HepG2 (cell line): ENCODE measurements at regions of chr16 and their contacts with region 1.

Region 1: GRCh38 chr16:67246934-67247697 is at the start of gene FHOD1:
- DNase-seq: peak; percentile 83
- ATAC-seq: peak; percentile 68
- H3K4me3 ChIP-seq: peak within 1 kb of the TSS; percentile 63 to 85 (median 82)
- H3K27ac ChIP-seq: peak within 1 kb of the TSS; percentile 73
- H3K4me1 ChIP-seq: peaks cover 57% of the 10 kb centered on the region
- H3K27me3 ChIP-seq: peaks cover 0 to 22% of the 10 kb centered on the region in 2 experiments; a peak in 3 of 5 replicates
- CTCF ChIP-seq: no peak
- EP300 ChIP-seq: no peak
- POLR2A ChIP-seq: peak; percentile 14 to 72; a peak in 2 of 4 replicates
- RAD21 ChIP-seq: 0 out of 2 replicates have a peak, but pooled peaks have one; percentile 37
- total RNA-seq, gene FHOD1: 10.9 and 20.8 TPM in 2 replicates

Region 2: DNA sequence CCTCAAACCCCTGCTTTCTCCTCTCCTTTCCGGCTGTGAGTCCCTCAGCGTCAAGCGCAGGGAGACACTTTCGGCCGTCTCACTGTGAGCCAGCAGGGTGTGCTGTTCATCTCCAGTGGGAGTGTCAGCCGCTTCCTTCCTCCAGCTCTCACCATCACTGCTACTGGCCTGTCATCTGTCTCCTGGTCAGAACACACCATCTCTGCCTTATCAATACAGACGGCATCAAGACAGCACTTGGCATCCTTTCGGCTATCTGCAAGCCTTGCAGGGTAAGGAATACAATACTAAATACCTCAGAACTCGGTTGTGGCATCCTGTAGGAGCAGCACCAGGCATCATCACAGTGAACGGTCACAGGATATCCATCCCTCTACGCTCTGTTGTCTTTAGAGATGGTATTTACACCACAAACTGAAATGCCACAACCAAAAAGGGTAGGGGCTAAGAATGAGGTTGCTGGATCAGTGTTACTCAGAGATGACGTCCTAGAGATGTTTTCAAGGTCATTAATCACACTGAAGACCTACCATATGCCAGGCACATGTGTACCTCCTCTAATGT is 529.9 kb before region 1 on chr16:
- CTCF ChIA-PET with region 1: no interaction called
- POLR2A ChIA-PET with region 1: no interaction called
- in situ Hi-C with region 1: no loop called
- intact Hi-C with region 1: no loop called
- DNase-seq: peak; percentile 64
- ATAC-seq: peak; percentile 90
- H3K4me3 ChIP-seq: no peak overlapping the region
- H3K27ac ChIP-seq: no peak overlapping the region
- H3K4me1 ChIP-seq: peaks cover 16% of the 10 kb centered on the region
- H3K27me3 ChIP-seq: no peaks in the 10 kb centered on the region; a peak in 2 of 5 replicates
- CTCF ChIP-seq: peak; percentile 86
- EP300 ChIP-seq: no peak
- POLR2A ChIP-seq: no peak
- RAD21 ChIP-seq: peak; percentile 47

Region 3: DNA sequence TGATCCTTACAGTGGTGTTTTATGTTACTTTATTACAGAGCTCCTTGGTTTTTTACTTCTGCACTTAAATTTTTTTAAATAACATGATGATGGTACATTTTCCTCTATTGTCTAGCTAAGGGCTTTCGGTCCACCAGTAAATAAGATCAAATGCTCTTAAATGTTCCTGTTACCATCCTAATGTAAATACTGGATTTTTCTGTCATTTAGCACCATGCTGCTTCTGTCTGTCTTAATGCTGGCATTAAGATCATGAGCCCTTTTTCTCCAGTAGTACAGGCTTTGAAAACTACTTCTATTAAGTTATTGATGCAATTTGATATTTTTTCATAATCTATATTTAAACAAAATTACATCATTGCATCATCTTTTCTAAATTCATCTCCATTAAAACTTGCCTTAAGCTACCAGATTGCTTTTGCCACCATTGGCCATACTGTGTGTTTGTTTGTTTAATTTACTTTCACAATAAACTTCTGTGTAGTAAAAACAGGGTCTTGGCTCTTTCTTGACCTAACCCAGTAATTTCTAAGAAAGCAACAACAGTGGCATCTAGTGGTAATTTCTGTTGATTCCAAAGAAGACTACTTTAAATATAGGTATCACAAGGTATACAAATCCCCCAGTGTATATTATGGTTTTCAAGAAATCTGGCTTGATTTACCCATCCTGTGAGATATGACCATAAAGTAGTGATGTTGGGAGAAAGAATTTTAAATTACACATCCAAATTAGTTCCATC is 146.4 kb before region 1 on chr16:
- CTCF ChIA-PET with region 1: no interaction called
- POLR2A ChIA-PET with region 1: no interaction called
- in situ Hi-C with region 1: no loop called
- intact Hi-C with region 1: no loop called
- DNase-seq: no peak
- ATAC-seq: no peak
- H3K4me3 ChIP-seq: no peak overlapping the region
- H3K27ac ChIP-seq: no peak overlapping the region
- H3K4me1 ChIP-seq: peaks cover 4% of the 10 kb centered on the region; the same call in 1 of the 2 replicates
- H3K27me3 ChIP-seq: no peaks in the 10 kb centered on the region
- CTCF ChIP-seq: peak; percentile 33
- EP300 ChIP-seq: no peak
- POLR2A ChIP-seq: no peak
- RAD21 ChIP-seq: no peak

Region 4: GRCh38 chr16:67191995-67192681 is 55.0 kb before region 1 on chr16 and contains the start of gene E2F4:
- CTCF ChIA-PET with region 1: no interaction called
- POLR2A ChIA-PET with region 1: interaction called, 3 read pairs
- in situ Hi-C with region 1: no loop called
- intact Hi-C with region 1: loop called (anchors 2 kb)
- DNase-seq: peak; percentile 88
- ATAC-seq: peak; percentile 95
- H3K4me3 ChIP-seq: peak within 1 kb of the TSS; percentile 84 to 99 (median 97)
- H3K27ac ChIP-seq: peak within 1 kb of the TSS; percentile 59
- H3K4me1 ChIP-seq: peaks cover 38% of the 10 kb centered on the region
- H3K27me3 ChIP-seq: peaks cover 7 to 16% of the 10 kb centered on the region in 2 experiments; a peak in 2 of 5 replicates
- CTCF ChIP-seq: peak; percentile 41
- EP300 ChIP-seq: no peak
- POLR2A ChIP-seq: peak in 1 of 2 experiments; percentile 64; a peak in 1 of 4 replicates
- RAD21 ChIP-seq: peak; percentile 57
- total RNA-seq, gene E2F4: 73.7 and 84.8 TPM in 2 replicates

Region 5: DNA sequence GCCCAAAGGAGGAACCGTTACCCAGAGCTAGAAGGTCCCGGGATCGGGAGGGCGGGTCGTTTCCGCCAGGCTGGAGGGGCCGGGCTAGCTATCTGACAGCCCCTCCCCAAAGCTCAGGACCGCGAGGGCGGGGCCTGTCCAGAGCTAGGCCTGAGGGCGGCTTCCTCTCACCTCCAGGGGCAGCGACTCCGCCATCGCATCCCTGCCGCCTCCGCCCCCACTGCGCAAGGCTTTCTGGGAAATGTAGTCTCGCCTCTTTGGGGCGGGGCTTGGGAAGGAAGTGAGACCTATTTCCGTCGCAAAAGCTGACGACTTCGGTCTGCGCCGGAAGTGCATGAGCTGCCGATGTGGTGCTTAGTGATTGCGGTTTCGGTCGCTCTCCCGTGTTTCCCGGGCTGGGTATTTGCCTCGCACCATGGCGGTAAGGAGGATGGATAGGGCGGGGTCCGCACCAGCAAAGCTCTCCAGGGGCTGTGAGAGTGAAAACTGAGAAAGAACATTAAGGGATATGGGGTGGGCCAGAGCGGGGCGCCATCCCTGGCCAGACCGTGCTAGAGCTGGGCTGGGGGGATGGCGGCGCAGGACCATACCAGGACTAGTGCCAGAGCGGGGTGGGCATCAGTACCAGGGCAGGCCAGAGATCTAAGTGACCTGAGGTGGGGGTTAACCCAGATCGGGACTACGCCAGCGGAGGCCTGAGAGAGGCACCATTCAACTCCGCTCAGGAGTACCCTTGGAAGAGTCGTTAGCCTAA is 20.1 kb before region 1 on chr16 and contains the start of gene TMEM208:
- CTCF ChIA-PET with region 1: no interaction called
- POLR2A ChIA-PET with region 1: interaction called, 71 read pairs
- in situ Hi-C with region 1: no loop called
- intact Hi-C with region 1: loop called (anchors 1 kb)
- DNase-seq: peak; percentile 99
- ATAC-seq: peak; percentile 96
- H3K4me3 ChIP-seq: peak within 1 kb of the TSS; percentile 97 to 100 (median 98)
- H3K27ac ChIP-seq: peak within 1 kb of the TSS; percentile 55
- H3K4me1 ChIP-seq: peaks cover 34% of the 10 kb centered on the region
- H3K27me3 ChIP-seq: peaks cover 0 to 4% of the 10 kb centered on the region in 2 experiments; a peak in 1 of 5 replicates
- CTCF ChIP-seq: peak; percentile 61
- EP300 ChIP-seq: peak; percentile 30 to 45; a peak in 2 of 4 replicates
- POLR2A ChIP-seq: peak; percentile 90 to 95
- RAD21 ChIP-seq: peak; percentile 45
- total RNA-seq, gene TMEM208: 50.6 and 72.9 TPM in 2 replicates

Region 6: GRCh38 chr16:67269766-67270165 is 22.6 kb after region 1 on chr16:
- CTCF ChIA-PET with region 1: no interaction called
- POLR2A ChIA-PET with region 1: interaction called, 13 read pairs
- in situ Hi-C with region 1: no loop called
- intact Hi-C with region 1: no loop called
- DNase-seq: no peak
- ATAC-seq: peak; percentile 12; the same call in 2 of the 3 replicates
- H3K4me3 ChIP-seq: no peak overlapping the region
- H3K27ac ChIP-seq: no peak overlapping the region
- H3K4me1 ChIP-seq: no peaks in the 10 kb centered on the region
- H3K27me3 ChIP-seq: peaks cover 7 to 17% of the 10 kb centered on the region in 2 experiments; a peak in 4 of 5 replicates
- CTCF ChIP-seq: no peak
- EP300 ChIP-seq: no peak
- POLR2A ChIP-seq: no peak
- RAD21 ChIP-seq: no peak

Region 7: DNA sequence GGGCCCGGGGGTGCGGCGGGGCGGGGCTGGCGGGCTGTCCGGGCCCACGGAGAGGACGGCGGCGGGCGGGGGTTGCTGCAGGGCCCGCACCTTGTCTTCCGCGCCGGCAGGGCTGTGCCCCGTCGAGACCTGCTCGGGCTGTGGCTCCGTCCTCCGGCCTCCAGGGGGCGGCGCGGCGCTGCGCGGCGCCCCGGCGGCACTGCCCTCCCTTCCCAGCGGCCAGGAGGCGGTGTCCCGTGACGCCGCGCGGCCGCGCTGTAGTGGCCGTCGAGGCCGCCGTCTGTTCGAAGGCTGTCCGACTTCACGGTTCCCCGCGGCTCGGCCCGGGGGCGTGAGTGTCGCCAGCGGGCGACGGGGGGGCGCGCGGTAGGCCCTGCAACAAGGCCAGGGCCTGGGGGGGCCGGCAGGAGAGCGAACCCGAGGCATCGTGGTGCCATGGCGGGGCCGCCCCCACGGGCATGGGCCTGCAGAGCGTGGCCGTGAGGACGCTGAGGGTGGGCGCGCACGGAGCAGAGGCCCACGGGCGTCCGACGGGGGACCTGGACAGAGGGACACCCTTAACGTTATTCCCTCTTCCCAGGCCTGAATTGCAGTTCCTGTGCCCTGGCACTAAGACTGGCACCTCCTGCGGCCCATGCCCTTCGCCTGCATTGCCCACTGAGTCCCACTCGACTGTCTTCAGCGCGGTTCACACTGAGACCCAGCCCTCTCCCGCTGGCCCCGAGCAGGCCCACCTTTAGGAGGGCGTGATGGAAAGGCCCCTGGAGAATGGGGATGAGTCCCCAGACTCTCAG is 32.4 kb after region 1 on chr16 and contains the start of gene PLEKHG4:
- CTCF ChIA-PET with region 1: no interaction called
- POLR2A ChIA-PET with region 1: interaction called, 16 read pairs
- in situ Hi-C with region 1: no loop called
- intact Hi-C with region 1: no loop called
- DNase-seq: peak; percentile 69
- ATAC-seq: peak; percentile 95
- H3K4me3 ChIP-seq: peak within 1 kb of the TSS; percentile 57 to 89 (median 67)
- H3K27ac ChIP-seq: peak within 1 kb of the TSS; percentile 41
- H3K4me1 ChIP-seq: peaks cover 28% of the 10 kb centered on the region
- H3K27me3 ChIP-seq: no peaks in the 10 kb centered on the region
- CTCF ChIP-seq: peak; percentile 71; the same call in 1 of the 2 replicates
- EP300 ChIP-seq: no peak
- POLR2A ChIP-seq: peak; percentile 40 to 77; a peak in 3 of 4 replicates
- RAD21 ChIP-seq: peak; percentile 94
- total RNA-seq, gene PLEKHG4: 9.0 and 13.6 TPM in 2 replicates